ENCODE measurements at regions of chr10 and their contacts with region 1.

Region 1: GRCh38 chr10:30534465-30535144 is 94.9 kb downstream of the LYZL2 start:
- DNase-seq: peak; percentile 86
- ATAC-seq: peak; percentile 40
- H3K4me3 ChIP-seq: no peak overlapping the region
- H3K4me3 Mint-ChIP-seq: no peak overlapping the region
- H3K27ac ChIP-seq: no peak overlapping the region
- H3K27ac Mint-ChIP-seq: peak overlapping the region; percentile 22
- H3K4me1 ChIP-seq: peaks cover 42 to 44% of the 10 kb centered on the region in 2 donors
- H3K4me1 Mint-ChIP-seq: peaks cover 36% of the 10 kb centered on the region
- H3K27me3 ChIP-seq: no peaks in the 10 kb centered on the region
- H3K27me3 Mint-ChIP-seq: no peaks in the 10 kb centered on the region
- CTCF ChIP-seq: peak; percentile 93

Region 2: GRCh38 chr10:30392564-30392990 is 142.0 kb before region 1 on chr10:
- CTCF ChIA-PET with region 1: interaction called, 52 read pairs
- POLR2A ChIA-PET with region 1: no interaction called
- intact Hi-C with region 1: loop called (anchors 1 kb)
- DNase-seq: peak; percentile 82
- ATAC-seq: peak; percentile 100
- H3K4me3 ChIP-seq: no peak overlapping the region
- H3K4me3 Mint-ChIP-seq: no peak overlapping the region
- H3K27ac ChIP-seq: no peak overlapping the region
- H3K27ac Mint-ChIP-seq: no peak overlapping the region
- H3K4me1 ChIP-seq: peaks cover 4 to 5% of the 10 kb centered on the region in 2 donors
- H3K4me1 Mint-ChIP-seq: peaks cover 3% of the 10 kb centered on the region
- H3K27me3 ChIP-seq: no peaks in the 10 kb centered on the region
- H3K27me3 Mint-ChIP-seq: peaks cover 15% of the 10 kb centered on the region
- CTCF ChIP-seq: peak; percentile 97

Region 3: DNA sequence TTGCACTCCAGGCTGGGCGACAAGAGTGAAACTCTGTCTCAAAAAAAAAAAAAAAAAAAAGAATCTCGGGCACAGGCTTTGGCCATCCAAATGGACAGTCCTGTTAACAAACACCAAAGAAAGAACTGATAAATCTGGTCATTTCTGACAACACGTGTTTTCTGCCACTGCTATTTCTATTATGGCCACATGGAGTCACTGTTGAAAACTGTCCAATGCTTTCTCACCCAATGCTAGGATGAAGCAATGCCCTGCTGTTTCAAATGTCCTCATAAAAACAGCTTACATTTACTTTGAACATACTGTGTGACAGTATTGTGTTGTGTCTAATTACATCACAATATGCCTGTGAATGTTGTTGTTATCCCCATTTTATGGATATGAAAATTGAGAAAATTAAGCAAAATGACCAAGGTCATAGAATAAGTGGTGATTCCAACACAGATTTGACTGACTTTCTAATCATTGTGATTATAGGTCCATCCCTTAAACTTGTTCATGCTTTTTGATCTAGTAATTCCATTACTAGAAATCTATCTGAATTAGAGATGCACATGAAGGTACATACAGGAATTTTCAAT is 120.5 kb before region 1 on chr10:
- CTCF ChIA-PET with region 1: interaction called, 87 read pairs
- POLR2A ChIA-PET with region 1: interaction called, 3 read pairs
- intact Hi-C with region 1: loop called (anchors 1 kb)
- DNase-seq: peak; percentile 79
- ATAC-seq: peak; percentile 64
- H3K4me3 ChIP-seq: no peak overlapping the region
- H3K4me3 Mint-ChIP-seq: no peak overlapping the region
- H3K27ac ChIP-seq: peak overlapping the region in 1 of 2 donors; percentile 55
- H3K27ac Mint-ChIP-seq: peak overlapping the region; percentile 71
- H3K4me1 ChIP-seq: peaks cover 34 to 35% of the 10 kb centered on the region in 2 donors
- H3K4me1 Mint-ChIP-seq: peaks cover 43% of the 10 kb centered on the region
- H3K27me3 ChIP-seq: no peaks in the 10 kb centered on the region
- H3K27me3 Mint-ChIP-seq: no peaks in the 10 kb centered on the region
- CTCF ChIP-seq: peak; percentile 85

Region 4: GRCh38 chr10:30433730-30434272 is 100.8 kb before region 1 on chr10 and contains the start of gene MAP3K8:
- CTCF ChIA-PET with region 1: interaction called, 35 read pairs
- POLR2A ChIA-PET with region 1: interaction called, 43 read pairs
- intact Hi-C with region 1: loop called (anchors 1 kb)
- DNase-seq: peak; percentile 96
- ATAC-seq: peak; percentile 73
- H3K4me3 ChIP-seq: peak within 1 kb of the TSS; percentile 93 to 99 (median 97)
- H3K4me3 Mint-ChIP-seq: peak within 1 kb of the TSS; percentile 98
- H3K27ac ChIP-seq: peak within 1 kb of the TSS; percentile 95 to 99
- H3K27ac Mint-ChIP-seq: peak within 1 kb of the TSS; percentile 97
- H3K4me1 ChIP-seq: peaks cover 56 to 74% of the 10 kb centered on the region in 2 donors
- H3K4me1 Mint-ChIP-seq: peaks cover 71% of the 10 kb centered on the region
- H3K27me3 ChIP-seq: no peaks in the 10 kb centered on the region
- H3K27me3 Mint-ChIP-seq: no peaks in the 10 kb centered on the region
- CTCF ChIP-seq: no peak
- total RNA-seq, gene MAP3K8: 97.0 and 104 TPM in 2 replicates

Region 5: GRCh38 chr10:30447125-30447799 is 87.3 kb before region 1 on chr10:
- CTCF ChIA-PET with region 1: interaction called, 10 read pairs
- POLR2A ChIA-PET with region 1: interaction called, 3 read pairs
- intact Hi-C with region 1: no loop called
- DNase-seq: no peak
- ATAC-seq: no peak
- H3K4me3 ChIP-seq: no peak overlapping the region
- H3K4me3 Mint-ChIP-seq: peak overlapping the region; percentile 16
- H3K27ac ChIP-seq: peak overlapping the region; percentile 9 to 49
- H3K27ac Mint-ChIP-seq: peak overlapping the region; percentile 28
- H3K4me1 ChIP-seq: peaks cover 34% of the 10 kb centered on the region in 2 donors
- H3K4me1 Mint-ChIP-seq: peaks cover 51% of the 10 kb centered on the region
- H3K27me3 ChIP-seq: no peaks in the 10 kb centered on the region
- H3K27me3 Mint-ChIP-seq: no peaks in the 10 kb centered on the region
- CTCF ChIP-seq: no peak

Region 6: GRCh38 chr10:30456266-30456665 is 78.3 kb before region 1 on chr10:
- CTCF ChIA-PET with region 1: interaction called, 26 read pairs
- POLR2A ChIA-PET with region 1: no interaction called
- intact Hi-C with region 1: loop called (anchors 5 kb)
- DNase-seq: peak; percentile 60
- ATAC-seq: peak; percentile 70
- H3K4me3 ChIP-seq: peak overlapping the region in 4 of 5 experiments; percentile 7 to 43 (median 26)
- H3K4me3 Mint-ChIP-seq: peak overlapping the region; percentile 42
- H3K27ac ChIP-seq: peak overlapping the region; percentile 58 to 65
- H3K27ac Mint-ChIP-seq: peak overlapping the region; percentile 86
- H3K4me1 ChIP-seq: peaks cover 43 to 48% of the 10 kb centered on the region in 2 donors
- H3K4me1 Mint-ChIP-seq: peaks cover 41% of the 10 kb centered on the region
- H3K27me3 ChIP-seq: no peaks in the 10 kb centered on the region
- H3K27me3 Mint-ChIP-seq: no peaks in the 10 kb centered on the region
- CTCF ChIP-seq: no peak

Region 7: GRCh38 chr10:30583778-30584415 is 49.3 kb after region 1 on chr10:
- CTCF ChIA-PET with region 1: interaction called, 27 read pairs
- POLR2A ChIA-PET with region 1: no interaction called
- intact Hi-C with region 1: no loop called
- DNase-seq: peak; percentile 27
- ATAC-seq: no peak
- H3K4me3 ChIP-seq: peak overlapping the region in 4 of 5 experiments; percentile 24 to 51 (median 49)
- H3K4me3 Mint-ChIP-seq: peak overlapping the region; percentile 63
- H3K27ac ChIP-seq: no peak overlapping the region
- H3K27ac Mint-ChIP-seq: no peak overlapping the region
- H3K4me1 ChIP-seq: peaks cover 24 to 27% of the 10 kb centered on the region in 2 donors
- H3K4me1 Mint-ChIP-seq: peaks cover 27% of the 10 kb centered on the region
- H3K27me3 ChIP-seq: no peaks in the 10 kb centered on the region
- H3K27me3 Mint-ChIP-seq: no peaks in the 10 kb centered on the region
- CTCF ChIP-seq: no peak

Region 8: DNA sequence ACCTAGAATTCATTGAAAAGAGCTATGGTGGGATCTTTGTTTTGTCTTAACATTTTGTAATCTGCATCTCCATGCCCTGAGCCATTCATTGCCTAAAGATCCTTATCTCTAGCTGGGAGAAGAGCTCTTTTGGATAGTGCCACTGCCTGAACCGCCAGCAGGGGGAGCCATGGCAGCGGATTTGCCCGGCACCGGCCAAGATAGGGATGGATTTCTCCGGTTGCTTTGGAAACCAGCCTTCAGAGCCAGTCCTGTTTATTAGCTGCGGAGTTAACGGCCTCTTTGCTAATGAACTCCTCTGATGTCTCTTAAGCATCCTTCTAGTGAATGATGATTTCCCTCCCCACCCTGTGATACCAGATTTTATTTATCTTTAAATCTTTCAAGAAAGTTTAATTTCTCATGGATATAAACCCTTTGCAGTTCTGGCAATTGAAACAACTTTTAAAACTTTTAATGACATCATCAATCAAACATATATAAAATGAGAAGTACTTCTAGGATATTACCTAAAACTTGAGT is 153.2 kb after region 1 on chr10:
- CTCF ChIA-PET with region 1: no interaction called
- POLR2A ChIA-PET with region 1: no interaction called
- intact Hi-C with region 1: no loop called
- DNase-seq: peak; percentile 72
- ATAC-seq: peak; percentile 67
- H3K4me3 ChIP-seq: no peak overlapping the region
- H3K4me3 Mint-ChIP-seq: no peak overlapping the region
- H3K27ac ChIP-seq: no peak overlapping the region
- H3K27ac Mint-ChIP-seq: no peak overlapping the region
- H3K4me1 ChIP-seq: peaks cover 0 to 3% of the 10 kb centered on the region in 2 donors
- H3K4me1 Mint-ChIP-seq: no peaks in the 10 kb centered on the region
- H3K27me3 ChIP-seq: peaks cover 0 to 18% (median 9%) of the 10 kb centered on the region in 4 experiments
- H3K27me3 Mint-ChIP-seq: peaks cover 41% of the 10 kb centered on the region
- CTCF ChIP-seq: peak; percentile 98

Measured in B cell (primary cell).